ENCODE measurements at regions of chr10 and their contacts with region 1.

Region 1: DNA sequence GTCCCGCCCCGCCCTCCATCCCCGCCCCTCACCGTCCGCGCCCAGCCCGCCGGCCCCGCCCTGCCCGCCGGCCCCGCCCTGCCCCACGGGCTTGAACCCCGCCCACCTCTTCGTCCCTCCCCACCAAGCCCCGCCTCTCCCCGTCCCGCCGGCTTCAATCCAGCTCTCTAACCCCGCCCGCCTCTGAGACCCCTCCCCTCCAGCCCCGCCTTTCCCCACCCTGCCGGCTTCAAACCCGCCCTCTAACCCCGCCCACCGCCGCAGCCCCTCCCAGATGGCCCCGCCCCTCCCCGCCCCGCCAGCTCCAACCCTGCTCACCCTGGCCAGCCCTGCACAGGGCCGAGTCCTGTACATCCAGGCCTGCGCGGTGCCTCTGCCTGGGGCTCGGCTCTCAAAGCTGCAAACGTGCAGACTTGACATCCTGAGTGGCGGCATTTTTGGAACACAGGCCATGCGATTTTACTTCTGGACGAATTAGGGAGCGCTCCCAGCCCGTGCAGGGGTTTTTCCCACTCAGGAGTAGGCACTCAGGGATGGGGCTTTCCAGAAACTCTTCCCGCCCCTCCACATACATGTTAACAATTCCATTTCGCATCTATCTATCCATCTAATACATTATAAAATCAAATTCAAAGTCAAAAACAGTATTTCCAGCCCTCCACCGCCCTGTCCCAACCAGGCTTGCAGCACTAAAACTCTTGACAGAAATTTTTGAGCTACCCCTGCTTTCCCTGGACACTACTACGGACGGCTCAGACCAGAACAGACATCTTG is 475 bp upstream of the NMT2 start:
- DNase-seq: peak; percentile 93 to 98 (median 96)
- ATAC-seq: peak; percentile 87
- H3K4me3 ChIP-seq: peak overlapping the region; percentile 42 to 47
- H3K4me3 Mint-ChIP-seq: peak overlapping the region; percentile 83
- H3K27ac ChIP-seq: peak overlapping the region; percentile 48 to 64
- H3K27ac Mint-ChIP-seq: peak overlapping the region; percentile 93
- H3K4me1 ChIP-seq: peaks cover 40% of the 10 kb centered on the region
- H3K4me1 Mint-ChIP-seq: peaks cover 66% of the 10 kb centered on the region
- H3K27me3 ChIP-seq: no peaks in the 10 kb centered on the region
- H3K27me3 Mint-ChIP-seq: no peaks in the 10 kb centered on the region
- CTCF ChIP-seq: no peak

Region 2: GRCh38 chr10:14604181-14605142 is 564.5 kb before region 1 on chr10:
- CTCF ChIA-PET with region 1: no interaction called
- POLR2A ChIA-PET with region 1: no interaction called
- intact Hi-C with region 1: loop called in 1 of 2 experiments (anchors 10 kb)
- DNase-seq: peak; percentile 39 to 86 (median 73)
- ATAC-seq: peak; percentile 71
- H3K4me3 ChIP-seq: peak overlapping the region; percentile 55 to 66
- H3K4me3 Mint-ChIP-seq: peak overlapping the region; percentile 93
- H3K27ac ChIP-seq: peak overlapping the region; percentile 48
- H3K27ac Mint-ChIP-seq: peak overlapping the region; percentile 94
- H3K4me1 ChIP-seq: peaks cover 44% of the 10 kb centered on the region
- H3K4me1 Mint-ChIP-seq: peaks cover 50% of the 10 kb centered on the region
- H3K27me3 ChIP-seq: no peaks in the 10 kb centered on the region
- H3K27me3 Mint-ChIP-seq: no peaks in the 10 kb centered on the region
- CTCF ChIP-seq: peak; percentile 16

Region 3: GRCh38 chr10:14954001-14954770 is 214.8 kb before region 1 on chr10 and contains the start of gene DCLRE1C:
- CTCF ChIA-PET with region 1: no interaction called
- POLR2A ChIA-PET with region 1: no interaction called
- intact Hi-C with region 1: loop called (anchors 1 to 2 kb)
- DNase-seq: peak; percentile 65 to 93 (median 86)
- ATAC-seq: peak; percentile 84
- H3K4me3 ChIP-seq: peak within 1 kb of the TSS; percentile 79 to 95
- H3K4me3 Mint-ChIP-seq: peak within 1 kb of the TSS; percentile 92
- H3K27ac ChIP-seq: peak within 1 kb of the TSS; percentile 64 to 82
- H3K27ac Mint-ChIP-seq: peak within 1 kb of the TSS; percentile 96
- H3K4me1 ChIP-seq: peaks cover 29% of the 10 kb centered on the region
- H3K4me1 Mint-ChIP-seq: peaks cover 52% of the 10 kb centered on the region
- H3K27me3 ChIP-seq: no peaks in the 10 kb centered on the region
- H3K27me3 Mint-ChIP-seq: no peaks in the 10 kb centered on the region
- CTCF ChIP-seq: no peak
- total RNA-seq, gene DCLRE1C: 15.1 to 15.9 TPM

Region 4: GRCh38 chr10:15072358-15072757 is 96.6 kb before region 1 on chr10:
- CTCF ChIA-PET with region 1: no interaction called
- POLR2A ChIA-PET with region 1: no interaction called
- intact Hi-C with region 1: no loop called
- DNase-seq: no peak
- ATAC-seq: no peak
- H3K4me3 ChIP-seq: no peak overlapping the region
- H3K4me3 Mint-ChIP-seq: no peak overlapping the region
- H3K27ac ChIP-seq: no peak overlapping the region
- H3K27ac Mint-ChIP-seq: no peak overlapping the region
- H3K4me1 ChIP-seq: no peaks in the 10 kb centered on the region
- H3K4me1 Mint-ChIP-seq: no peaks in the 10 kb centered on the region
- H3K27me3 ChIP-seq: no peaks in the 10 kb centered on the region
- H3K27me3 Mint-ChIP-seq: no peaks in the 10 kb centered on the region
- CTCF ChIP-seq: no peak

Region 5: DNA sequence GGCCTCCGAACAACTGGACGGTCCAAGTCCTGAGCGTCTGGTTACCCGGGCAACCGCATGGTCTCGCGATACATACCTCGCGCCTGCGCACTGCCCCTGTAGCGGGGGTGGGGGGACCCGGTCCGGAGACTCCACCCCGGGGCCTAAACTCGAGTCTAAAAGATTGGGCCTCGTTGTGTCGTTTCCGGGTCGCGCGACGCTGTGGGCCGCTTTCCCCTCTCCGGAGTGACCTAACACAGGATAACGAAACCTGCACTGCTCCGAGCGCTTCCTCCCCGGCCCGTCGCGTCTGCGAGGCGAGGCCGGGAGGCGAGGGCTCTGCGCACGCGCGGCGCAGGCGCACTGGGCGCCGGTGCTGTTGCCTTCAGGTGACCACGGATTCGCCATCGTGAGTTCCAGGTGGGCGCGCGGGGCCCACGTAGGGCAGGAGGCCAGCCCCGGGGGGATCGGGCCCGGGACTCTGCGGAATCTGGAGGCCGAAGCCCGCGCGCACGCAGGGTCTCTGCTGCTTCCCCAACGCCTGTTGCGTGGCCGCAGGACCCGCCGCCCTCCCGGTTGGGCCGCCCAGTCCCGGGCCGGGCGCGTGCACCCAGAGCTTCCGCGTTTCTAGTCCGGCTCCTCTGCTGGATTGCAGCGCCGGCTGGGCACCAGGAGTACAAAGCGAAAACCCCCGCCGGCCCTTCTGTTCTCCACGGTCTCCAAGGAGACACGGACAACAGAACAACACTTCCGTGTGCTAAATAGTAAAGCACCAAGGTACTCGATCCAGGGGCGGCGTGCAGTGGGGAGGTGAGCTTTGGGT is 71.8 kb before region 1 on chr10 and contains the start of gene RPP38:
- CTCF ChIA-PET with region 1: no interaction called
- POLR2A ChIA-PET with region 1: interaction called, 4 read pairs
- intact Hi-C with region 1: loop called (anchors 1 kb)
- DNase-seq: peak; percentile 85 to 98 (median 95)
- ATAC-seq: peak; percentile 83
- H3K4me3 ChIP-seq: peak within 1 kb of the TSS; percentile 74 to 88
- H3K4me3 Mint-ChIP-seq: peak within 1 kb of the TSS; percentile 97
- H3K27ac ChIP-seq: peak within 1 kb of the TSS; percentile 92 to 96
- H3K27ac Mint-ChIP-seq: peak within 1 kb of the TSS; percentile 97
- H3K4me1 ChIP-seq: peaks cover 28% of the 10 kb centered on the region
- H3K4me1 Mint-ChIP-seq: peaks cover 35% of the 10 kb centered on the region
- H3K27me3 ChIP-seq: no peaks in the 10 kb centered on the region
- H3K27me3 Mint-ChIP-seq: no peaks in the 10 kb centered on the region
- CTCF ChIP-seq: no peak
- total RNA-seq, gene RPP38: 10.6 to 12.3 TPM

Region 6: GRCh38 chr10:15150563-15150962 is 18.4 kb before region 1 on chr10:
- CTCF ChIA-PET with region 1: no interaction called
- POLR2A ChIA-PET with region 1: no interaction called
- intact Hi-C with region 1: no loop called
- DNase-seq: no peak
- ATAC-seq: no peak
- H3K4me3 ChIP-seq: no peak overlapping the region
- H3K4me3 Mint-ChIP-seq: no peak overlapping the region
- H3K27ac ChIP-seq: no peak overlapping the region
- H3K27ac Mint-ChIP-seq: peak overlapping the region; percentile 53
- H3K4me1 ChIP-seq: peaks cover 12% of the 10 kb centered on the region
- H3K4me1 Mint-ChIP-seq: peaks cover 46% of the 10 kb centered on the region
- H3K27me3 ChIP-seq: no peaks in the 10 kb centered on the region
- H3K27me3 Mint-ChIP-seq: no peaks in the 10 kb centered on the region
- CTCF ChIP-seq: no peak

Region 7: GRCh38 chr10:15209827-15210509 is 41.0 kb after region 1 on chr10:
- CTCF ChIA-PET with region 1: interaction called, 21 read pairs
- POLR2A ChIA-PET with region 1: interaction called, 23 read pairs
- intact Hi-C with region 1: loop called (anchors 1 kb)
- DNase-seq: peak; percentile 58 to 90 (median 84)
- ATAC-seq: peak; percentile 61
- H3K4me3 ChIP-seq: no peak overlapping the region
- H3K4me3 Mint-ChIP-seq: peak overlapping the region; percentile 70
- H3K27ac ChIP-seq: no peak overlapping the region
- H3K27ac Mint-ChIP-seq: peak overlapping the region; percentile 73
- H3K4me1 ChIP-seq: peaks cover 30% of the 10 kb centered on the region
- H3K4me1 Mint-ChIP-seq: peaks cover 60% of the 10 kb centered on the region
- H3K27me3 ChIP-seq: no peaks in the 10 kb centered on the region
- H3K27me3 Mint-ChIP-seq: no peaks in the 10 kb centered on the region
- CTCF ChIP-seq: peak; percentile 90

Region 8: DNA sequence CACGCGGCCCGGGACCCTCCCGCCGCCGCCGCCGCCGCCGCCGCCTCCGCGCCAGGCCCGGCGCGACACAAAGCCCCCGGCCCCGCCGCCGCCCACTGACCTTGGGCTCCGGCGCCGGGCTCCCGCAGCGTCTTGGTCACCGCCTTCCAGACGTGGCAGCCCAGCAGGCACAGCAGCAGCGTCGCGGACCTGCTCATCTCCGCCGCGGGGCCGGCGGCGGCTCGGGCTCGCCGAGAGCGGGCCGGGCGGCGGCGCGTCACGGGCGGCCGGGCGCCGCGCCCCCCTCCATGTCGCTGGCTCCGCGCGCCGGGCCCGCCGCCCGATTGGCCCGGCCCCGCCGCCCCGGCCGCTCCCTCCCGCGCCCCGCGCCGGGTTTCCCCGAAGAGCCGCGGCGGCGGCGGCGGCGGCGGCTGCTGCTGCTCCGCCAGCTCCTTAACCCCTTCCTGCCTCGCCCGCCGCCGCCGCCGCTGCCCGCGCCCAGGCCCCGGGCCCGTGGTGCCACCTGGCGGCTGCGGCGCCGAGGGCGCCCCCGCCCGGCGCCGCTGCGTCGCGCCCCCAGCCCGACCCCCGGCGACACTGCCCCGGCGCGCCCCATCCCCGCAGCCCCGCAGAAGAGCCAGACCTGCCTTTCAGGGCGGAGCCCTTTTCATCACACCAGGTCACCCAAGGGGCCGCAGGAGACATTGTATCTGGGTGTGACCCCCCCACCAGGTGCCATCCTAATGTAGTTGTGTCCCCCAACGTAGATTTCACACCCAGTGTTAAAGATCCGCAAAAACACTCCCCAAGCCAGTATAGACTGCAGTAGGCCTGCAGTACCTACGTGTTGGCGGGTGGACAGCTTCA is 202.1 kb after region 1 on chr10 and contains the start of gene FAM171A1:
- CTCF ChIA-PET with region 1: no interaction called
- POLR2A ChIA-PET with region 1: no interaction called
- intact Hi-C with region 1: loop called (anchors 2 kb)
- DNase-seq: peak; percentile 12 to 80 (median 57)
- ATAC-seq: peak; percentile 78
- H3K4me3 ChIP-seq: peak within 1 kb of the TSS; percentile 25 to 33
- H3K4me3 Mint-ChIP-seq: peak within 1 kb of the TSS; percentile 80
- H3K27ac ChIP-seq: no peak within 1 kb of the TSS
- H3K27ac Mint-ChIP-seq: no peak within 1 kb of the TSS
- H3K4me1 ChIP-seq: peaks cover 9% of the 10 kb centered on the region
- H3K4me1 Mint-ChIP-seq: peaks cover 12% of the 10 kb centered on the region
- H3K27me3 ChIP-seq: peaks cover 0 to 9% of the 10 kb centered on the region in 2 experiments
- H3K27me3 Mint-ChIP-seq: peaks cover 33% of the 10 kb centered on the region
- CTCF ChIP-seq: no peak
- total RNA-seq, gene FAM171A1: 1.7 TPM

Region 9: GRCh38 chr10:15485684-15486316 is 316.8 kb after region 1 on chr10:
- CTCF ChIA-PET with region 1: no interaction called
- POLR2A ChIA-PET with region 1: no interaction called
- intact Hi-C with region 1: no loop called
- DNase-seq: no peak
- ATAC-seq: no peak
- H3K4me3 ChIP-seq: no peak overlapping the region
- H3K4me3 Mint-ChIP-seq: no peak overlapping the region
- H3K27ac ChIP-seq: no peak overlapping the region
- H3K27ac Mint-ChIP-seq: no peak overlapping the region
- H3K4me1 ChIP-seq: no peaks in the 10 kb centered on the region
- H3K4me1 Mint-ChIP-seq: no peaks in the 10 kb centered on the region
- H3K27me3 ChIP-seq: no peaks in the 10 kb centered on the region
- H3K27me3 Mint-ChIP-seq: peaks cover 18% of the 10 kb centered on the region
- CTCF ChIP-seq: no peak

Measured in CD8-positive, alpha-beta T cell (primary cell).